ENCODE measurements at regions of chrX and their contacts with region 1.

Region 1: DNA sequence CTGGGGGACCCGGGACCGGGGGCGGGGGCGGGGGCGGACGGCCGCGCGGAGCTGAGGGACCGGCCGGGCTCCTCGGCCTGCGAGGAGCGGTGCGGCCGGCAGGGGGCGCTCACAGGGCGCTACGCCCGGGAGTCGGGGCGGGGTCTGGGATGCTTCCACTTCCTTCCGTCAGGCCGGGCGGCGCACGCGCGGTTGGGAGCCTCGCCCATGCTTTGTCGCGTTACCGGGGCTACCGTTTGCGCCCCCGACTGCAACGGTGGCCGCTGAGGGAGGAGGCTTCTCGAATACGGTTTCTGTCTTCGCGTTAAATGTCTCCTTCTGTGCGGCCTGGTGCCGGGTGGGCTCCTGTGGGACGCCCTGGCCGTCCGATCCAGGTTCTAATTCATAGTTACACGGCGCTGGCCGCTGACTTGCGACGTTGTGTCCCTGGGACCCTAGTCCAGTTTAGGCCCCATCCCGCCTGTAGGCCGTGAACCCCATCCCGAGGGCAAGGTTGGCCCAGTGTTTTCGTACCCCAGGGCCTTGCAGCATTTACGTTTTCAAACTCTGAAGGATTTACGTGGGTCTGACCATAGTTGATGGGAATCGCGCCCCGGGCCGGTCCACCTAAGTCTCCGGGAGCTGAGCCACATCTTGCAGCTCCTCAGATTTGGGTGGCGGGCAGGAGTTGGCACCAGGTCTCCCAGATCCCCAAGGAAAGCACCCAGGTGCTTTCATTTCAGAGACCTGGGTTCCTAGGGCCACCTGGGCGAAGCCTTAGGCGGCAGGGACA is 549 bp downstream of the MSL3 start:
- DNase-seq: peak; percentile 89
- H3K4me3 ChIP-seq: peak overlapping the region; percentile 86
- H3K27ac ChIP-seq: peak overlapping the region; percentile 95
- H3K4me1 ChIP-seq: peaks cover 14% of the 10 kb centered on the region
- H3K27me3 ChIP-seq: no peaks in the 10 kb centered on the region

Region 2: DNA sequence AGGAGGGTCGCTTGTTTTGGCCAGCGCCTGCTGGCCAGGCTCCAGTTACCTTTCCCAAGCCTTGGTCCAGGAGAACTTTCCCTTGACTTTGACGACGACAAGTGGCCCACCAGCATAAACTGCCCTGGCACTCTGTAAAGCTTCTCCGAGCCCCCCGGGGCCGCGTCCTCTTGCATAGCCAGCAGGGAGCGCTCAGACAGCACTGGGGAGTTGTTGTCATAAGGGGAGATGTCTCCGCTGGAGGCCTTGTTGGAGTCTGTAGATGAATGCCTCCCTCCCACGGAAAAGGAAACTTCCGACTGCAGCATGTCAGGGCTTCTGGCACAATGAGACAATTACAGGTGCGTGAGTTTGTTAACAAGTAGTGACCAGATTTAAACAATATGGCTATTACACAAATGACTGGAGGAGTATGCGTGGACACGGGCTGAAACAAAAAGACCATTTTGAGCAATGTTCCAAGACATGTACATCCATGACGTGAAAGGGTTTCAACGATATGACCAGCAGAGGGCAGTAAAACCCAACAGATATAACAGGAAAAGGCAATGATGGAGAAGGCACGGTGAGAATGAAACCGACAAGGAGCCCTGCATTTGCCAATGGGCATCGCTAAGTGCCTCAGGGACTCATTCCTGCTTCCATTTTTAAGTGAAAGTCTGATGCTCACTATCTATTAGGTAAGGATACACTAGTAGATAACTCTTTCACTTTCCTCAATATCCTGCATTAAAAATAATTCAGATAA is 614.5 kb before region 1 on chrX:
- in situ Hi-C with region 1: loop called (anchors 25 kb)
- DNase-seq: peak; percentile 74
- H3K4me3 ChIP-seq: no peak overlapping the region
- H3K27ac ChIP-seq: no peak overlapping the region
- H3K4me1 ChIP-seq: no peaks in the 10 kb centered on the region
- H3K27me3 ChIP-seq: no peaks in the 10 kb centered on the region

Region 3: DNA sequence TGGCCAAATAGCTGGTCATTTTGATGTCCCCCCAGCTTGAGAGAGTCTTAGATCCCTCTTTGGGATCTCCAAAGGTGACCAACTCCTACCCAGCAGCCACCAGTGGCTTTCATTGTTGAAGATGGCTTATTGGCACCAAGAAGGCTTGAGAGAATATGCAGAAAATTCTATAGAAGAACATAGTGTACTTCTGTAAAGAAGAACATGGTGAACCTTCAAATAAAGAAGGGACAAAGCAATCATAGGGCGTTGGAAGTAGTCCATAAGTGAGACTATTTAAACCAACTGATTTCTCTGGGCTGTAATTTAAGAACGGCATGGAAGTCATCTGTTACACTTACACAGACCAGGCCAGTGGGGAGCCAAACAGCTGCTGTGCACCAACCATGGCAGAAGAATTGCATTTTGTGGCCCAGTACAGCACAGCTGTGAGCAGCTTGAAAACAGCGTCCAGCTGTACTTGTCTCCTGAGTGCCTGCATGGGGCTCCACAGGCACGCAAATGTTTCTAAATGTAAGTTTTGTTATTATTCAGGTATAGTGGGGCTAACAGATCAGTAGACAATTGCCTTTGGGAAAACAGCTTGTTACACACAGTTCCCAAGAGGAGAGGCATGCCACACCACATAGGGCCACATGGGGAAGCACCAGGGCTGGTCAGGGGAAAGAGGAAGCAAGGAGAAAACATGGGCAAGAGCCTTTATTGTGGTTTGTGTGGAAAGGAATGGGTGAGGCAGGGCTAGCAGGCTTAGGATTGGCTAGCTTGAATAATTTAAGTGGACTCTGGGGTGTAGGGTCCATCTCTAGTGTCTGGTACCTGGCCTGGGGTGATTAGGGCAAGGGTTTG is 217.8 kb before region 1 on chrX:
- in situ Hi-C with region 1: no loop called
- DNase-seq: peak; percentile 12
- H3K4me3 ChIP-seq: no peak overlapping the region
- H3K27ac ChIP-seq: no peak overlapping the region
- H3K4me1 ChIP-seq: no peaks in the 10 kb centered on the region
- H3K27me3 ChIP-seq: no peaks in the 10 kb centered on the region

Region 4: GRCh38 chrX:11597479-11597878 is 161.1 kb before region 1 on chrX:
- in situ Hi-C with region 1: no loop called
- DNase-seq: no peak
- H3K4me3 ChIP-seq: no peak overlapping the region
- H3K27ac ChIP-seq: no peak overlapping the region
- H3K4me1 ChIP-seq: no peaks in the 10 kb centered on the region
- H3K27me3 ChIP-seq: no peaks in the 10 kb centered on the region

Region 5: DNA sequence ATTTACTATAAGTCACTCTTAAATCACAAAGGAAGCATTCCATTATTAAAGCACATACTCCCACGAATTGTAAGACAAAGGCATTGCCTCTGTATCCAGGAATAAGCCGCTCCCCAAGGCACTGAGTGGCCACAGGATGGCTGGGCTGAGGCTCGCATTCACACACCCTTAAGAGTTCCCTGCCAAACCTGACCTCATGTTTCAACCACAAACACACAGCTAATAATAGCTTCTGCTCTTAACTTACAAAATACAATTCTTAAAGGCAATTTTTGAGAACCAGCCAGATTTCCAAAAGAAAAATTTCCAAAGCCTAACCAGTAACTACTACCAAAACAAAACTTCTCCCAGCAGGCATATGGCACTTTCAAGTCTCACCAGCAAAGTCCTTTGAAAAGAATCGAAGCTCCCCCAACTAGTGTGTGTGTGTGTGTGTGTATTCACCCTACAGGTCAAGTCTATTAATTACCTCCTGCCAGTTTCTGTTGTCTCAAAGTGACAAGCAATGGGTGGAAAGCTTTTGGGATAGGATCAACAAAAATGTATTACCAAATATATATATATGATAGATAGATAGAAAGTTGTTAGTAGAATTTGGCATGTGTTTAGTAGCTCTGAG is 128.9 kb before region 1 on chrX:
- in situ Hi-C with region 1: no loop called
- DNase-seq: peak; percentile 83
- H3K4me3 ChIP-seq: no peak overlapping the region
- H3K27ac ChIP-seq: no peak overlapping the region
- H3K4me1 ChIP-seq: peaks cover 3% of the 10 kb centered on the region
- H3K27me3 ChIP-seq: no peaks in the 10 kb centered on the region

Region 6: GRCh38 chrX:12021698-12022097 is 263.1 kb after region 1 on chrX:
- in situ Hi-C with region 1: no loop called
- DNase-seq: no peak
- H3K4me3 ChIP-seq: no peak overlapping the region
- H3K27ac ChIP-seq: no peak overlapping the region
- H3K4me1 ChIP-seq: no peaks in the 10 kb centered on the region
- H3K27me3 ChIP-seq: no peaks in the 10 kb centered on the region; the same call in 1 of the 2 replicates

Measured in GM23248 (cell line).